Naive thymus-derived CD4-positive, alpha-beta T cell (primary cell): ENCODE measurements at regions of chr16 and their contacts with region 1.

Region 1: GRCh38 chr16:53509906-53510703 is 7.1 kb upstream of the AKTIP start:
- DNase-seq: peak; percentile 34 to 72 (median 50)
- ATAC-seq: peak; percentile 86
- H3K4me3 ChIP-seq: peak overlapping the region; percentile 21
- H3K4me3 Mint-ChIP-seq: peak overlapping the region; percentile 8 to 75 (median 52)
- H3K27ac ChIP-seq: no peak overlapping the region
- H3K27ac Mint-ChIP-seq: peak overlapping the region in 4 of 9 donors; percentile 14 to 48 (median 31)
- H3K4me1 ChIP-seq: peaks cover 0 to 13% of the 10 kb centered on the region in 2 donors
- H3K4me1 Mint-ChIP-seq: peaks cover 1 to 44% (median 21%) of the 10 kb centered on the region in 7 donors
- H3K27me3 ChIP-seq: no peaks in the 10 kb centered on the region
- H3K27me3 Mint-ChIP-seq: peaks cover 0 to 6% (median 0%) of the 10 kb centered on the region in 5 donors

Region 2: GRCh38 chr16:53266156-53266555 is 243.9 kb before region 1 on chr16:
- CTCF ChIA-PET with region 1: no interaction called
- POLR2A ChIA-PET with region 1: no interaction called
- intact Hi-C with region 1: loop called (anchors 1 to 10 kb)
- DNase-seq: no peak
- ATAC-seq: no peak
- H3K4me3 ChIP-seq: no peak overlapping the region
- H3K4me3 Mint-ChIP-seq: no peak overlapping the region
- H3K27ac ChIP-seq: no peak overlapping the region
- H3K27ac Mint-ChIP-seq: peak overlapping the region in 1 of 9 donors; percentile 10
- H3K4me1 ChIP-seq: no peaks in the 10 kb centered on the region
- H3K4me1 Mint-ChIP-seq: no peaks in the 10 kb centered on the region
- H3K27me3 ChIP-seq: no peaks in the 10 kb centered on the region
- H3K27me3 Mint-ChIP-seq: no peaks in the 10 kb centered on the region

Region 3: DNA sequence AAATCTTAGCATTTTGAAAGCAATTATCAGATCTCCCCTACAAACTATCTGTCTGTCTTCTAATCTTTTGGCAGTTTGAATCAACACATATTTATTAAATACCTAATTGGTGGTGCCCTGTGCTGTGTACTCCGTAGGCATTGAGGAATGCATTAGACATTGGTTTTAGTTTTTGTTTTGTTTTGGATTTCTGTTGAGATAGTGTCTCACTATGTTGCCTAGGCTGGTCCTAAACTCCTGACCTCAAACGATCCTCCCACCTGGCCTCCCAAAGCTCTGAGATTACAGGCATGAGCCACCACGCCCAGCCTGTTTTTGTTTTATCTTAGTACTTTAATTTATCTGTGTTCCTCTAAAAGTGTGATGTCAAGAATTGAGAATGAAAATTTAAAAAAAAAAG is 200.6 kb before region 1 on chr16:
- CTCF ChIA-PET with region 1: no interaction called
- POLR2A ChIA-PET with region 1: no interaction called
- intact Hi-C with region 1: loop called in 1 of 2 experiments (anchors 2 kb)
- DNase-seq: no peak
- ATAC-seq: no peak
- H3K4me3 ChIP-seq: no peak overlapping the region
- H3K4me3 Mint-ChIP-seq: no peak overlapping the region
- H3K27ac ChIP-seq: no peak overlapping the region
- H3K27ac Mint-ChIP-seq: no peak overlapping the region
- H3K4me1 ChIP-seq: no peaks in the 10 kb centered on the region
- H3K4me1 Mint-ChIP-seq: peaks cover 0 to 5% (median 0%) of the 10 kb centered on the region in 7 donors
- H3K27me3 ChIP-seq: no peaks in the 10 kb centered on the region
- H3K27me3 Mint-ChIP-seq: no peaks in the 10 kb centered on the region

Region 4: DNA sequence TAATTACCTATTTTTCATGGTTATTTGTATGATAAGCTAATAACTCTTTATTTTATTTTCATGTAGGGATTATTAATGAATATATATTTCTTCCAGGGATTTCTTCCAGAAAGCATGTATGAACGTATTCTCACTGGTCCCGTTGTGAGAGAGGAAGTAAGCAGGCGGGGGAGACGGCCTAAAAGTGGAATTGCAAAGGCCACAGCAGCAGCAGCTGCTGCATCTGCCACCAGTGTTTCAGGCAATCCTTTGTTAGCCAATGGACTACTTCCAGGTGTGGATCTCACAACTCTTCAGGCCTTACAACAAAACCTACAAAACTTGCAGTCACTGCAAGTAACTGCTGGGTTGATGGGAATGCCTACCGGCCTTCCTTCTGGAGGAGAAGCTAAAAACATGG is 186.2 kb before region 1 on chr16:
- CTCF ChIA-PET with region 1: no interaction called
- POLR2A ChIA-PET with region 1: interaction called, 3 read pairs
- intact Hi-C with region 1: loop called in 1 of 2 experiments (anchors 2 kb)
- DNase-seq: no peak
- ATAC-seq: no peak
- H3K4me3 ChIP-seq: no peak overlapping the region
- H3K4me3 Mint-ChIP-seq: no peak overlapping the region
- H3K27ac ChIP-seq: no peak overlapping the region
- H3K27ac Mint-ChIP-seq: peak overlapping the region in 1 of 9 donors; percentile 21
- H3K4me1 ChIP-seq: no peaks in the 10 kb centered on the region
- H3K4me1 Mint-ChIP-seq: peaks cover 0 to 1% (median 0%) of the 10 kb centered on the region in 7 donors
- H3K27me3 ChIP-seq: no peaks in the 10 kb centered on the region
- H3K27me3 Mint-ChIP-seq: no peaks in the 10 kb centered on the region

Region 5: GRCh38 chr16:53583401-53583800 is 73.3 kb after region 1 on chr16:
- CTCF ChIA-PET with region 1: no interaction called
- POLR2A ChIA-PET with region 1: no interaction called
- intact Hi-C with region 1: no loop called
- DNase-seq: no peak
- ATAC-seq: no peak
- H3K4me3 ChIP-seq: no peak overlapping the region
- H3K4me3 Mint-ChIP-seq: no peak overlapping the region
- H3K27ac ChIP-seq: no peak overlapping the region
- H3K27ac Mint-ChIP-seq: no peak overlapping the region
- H3K4me1 ChIP-seq: no peaks in the 10 kb centered on the region
- H3K4me1 Mint-ChIP-seq: no peaks in the 10 kb centered on the region
- H3K27me3 ChIP-seq: no peaks in the 10 kb centered on the region
- H3K27me3 Mint-ChIP-seq: peaks cover 0 to 7% (median under 1%) of the 10 kb centered on the region in 5 donors